Gastrocnemius medialis (tissue), 4 donors: ENCODE measurements at regions of chr14 and their contacts with region 1.

Region 1: DNA sequence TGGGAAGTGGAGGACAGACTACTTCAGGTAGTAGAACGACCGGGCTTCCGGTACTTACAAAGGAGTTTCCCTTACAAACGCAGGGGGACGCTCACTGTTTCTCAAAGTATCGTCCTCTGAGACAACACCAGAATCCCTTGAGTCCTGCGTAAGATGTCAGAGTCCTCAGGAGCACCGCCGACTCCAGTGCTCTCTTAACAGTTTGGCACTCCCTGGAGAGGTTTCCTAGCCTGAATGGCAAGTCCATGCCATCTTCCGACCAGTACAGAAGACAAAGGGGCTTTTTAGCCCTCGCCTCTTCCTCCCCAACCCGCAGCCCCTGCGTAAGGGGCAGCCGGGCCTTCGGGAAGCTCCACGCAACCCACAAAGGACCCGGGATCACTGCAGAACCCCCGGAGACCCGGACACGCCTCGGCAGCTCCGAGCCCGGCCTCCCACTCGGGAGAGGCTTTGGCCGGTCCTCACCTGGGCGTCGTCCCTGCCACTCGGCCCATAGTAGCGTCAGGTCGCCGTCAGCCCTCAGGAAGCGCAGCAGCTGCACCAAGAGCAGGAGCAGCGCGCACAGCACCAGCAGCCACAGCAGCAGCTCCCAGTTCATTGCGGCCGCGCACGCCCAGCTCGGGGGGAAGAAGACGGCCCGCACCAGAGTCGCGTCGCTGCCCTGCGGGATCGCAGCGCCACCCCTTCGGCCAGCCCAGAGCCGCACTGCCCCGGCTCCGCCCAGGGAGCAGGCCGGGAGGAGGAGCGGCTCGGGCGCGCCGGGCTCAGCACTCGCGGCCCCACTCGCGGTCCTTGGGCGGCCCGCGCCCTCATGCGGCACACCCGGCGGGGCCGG is at the start of gene DHRS7:
- DNase-seq: peak; percentile 72 to 83
- ATAC-seq: peak; percentile 42
- H3K4me3 ChIP-seq: peak within 1 kb of the TSS; percentile 81 to 95 (median 92)
- H3K27ac ChIP-seq: peak within 1 kb of the TSS; percentile 97 to 100 (median 99)
- H3K4me1 ChIP-seq: peaks cover 33 to 52% of the 10 kb centered on the region in 2 donors
- H3K27me3 ChIP-seq: no peaks in the 10 kb centered on the region
- CTCF ChIP-seq: peak in 4 of 5 experiments; percentile 32 to 68 (median 40)
- POLR2A ChIP-seq: peak; percentile 71 to 88
- total RNA-seq, gene DHRS7: 937 to 2,179 (median 1,242) TPM

Region 2: DNA sequence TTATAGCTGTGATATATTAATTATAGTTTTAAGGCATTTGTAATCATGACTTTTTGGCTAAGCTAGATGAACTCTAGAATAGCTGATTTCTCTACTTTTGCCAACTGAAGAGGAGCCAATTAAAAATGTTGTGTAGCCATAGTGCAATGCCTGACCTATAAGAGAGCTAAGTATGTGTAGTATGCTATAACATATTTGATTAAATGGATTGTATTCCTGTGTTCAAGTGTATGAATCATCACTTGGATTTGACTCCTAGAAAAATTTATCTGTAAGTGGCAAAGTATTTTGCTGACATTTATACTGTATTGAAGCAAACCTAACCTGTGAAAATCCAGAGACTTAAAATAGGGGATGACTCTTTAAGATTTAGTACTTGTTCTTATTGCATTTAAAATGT is 39.0 kb before region 1 on chr14:
- in situ Hi-C with region 1: no loop called
- intact Hi-C with region 1: no loop called
- DNase-seq: no peak
- ATAC-seq: no peak
- H3K4me3 ChIP-seq: no peak overlapping the region
- H3K27ac ChIP-seq: no peak overlapping the region
- H3K4me1 ChIP-seq: no peaks in the 10 kb centered on the region
- H3K27me3 ChIP-seq: no peaks in the 10 kb centered on the region
- CTCF ChIP-seq: no peak
- POLR2A ChIP-seq: no peak

Region 3: DNA sequence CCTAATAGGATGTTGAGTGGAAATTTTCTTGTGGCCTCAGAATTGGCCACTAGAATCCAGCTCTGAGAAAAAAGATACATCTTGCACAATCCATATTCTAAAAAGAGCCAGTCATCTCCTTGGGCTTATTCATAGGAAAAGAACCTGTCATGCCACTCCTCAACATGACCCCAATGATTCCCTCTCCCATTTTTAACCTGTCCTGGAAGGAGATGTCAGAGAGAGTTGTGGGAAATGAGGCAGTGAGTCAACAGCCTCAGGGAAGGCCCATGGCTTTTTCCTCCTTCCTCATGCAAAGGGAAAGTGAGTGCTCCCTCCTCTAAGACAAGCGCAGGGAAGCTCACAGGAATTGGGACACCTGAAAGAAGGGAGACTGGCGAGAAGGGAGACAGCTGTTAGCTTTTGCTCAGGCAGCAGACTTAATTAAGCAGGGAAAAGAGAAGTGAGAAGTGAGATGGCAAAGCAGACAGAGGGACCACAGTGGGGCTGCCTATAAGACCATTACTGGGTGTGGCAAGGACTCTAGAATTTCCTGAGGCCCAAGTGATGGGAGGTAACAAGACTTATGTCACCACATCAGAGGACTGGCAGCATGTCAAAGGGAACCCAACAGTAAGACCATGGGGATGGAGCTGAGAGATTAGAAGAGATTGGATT is 10.4 kb after region 1 on chr14:
- in situ Hi-C with region 1: no loop called
- intact Hi-C with region 1: loop called (anchors 1 kb)
- DNase-seq: peak; percentile 62 to 73
- ATAC-seq: peak; percentile 83 to 90
- H3K4me3 ChIP-seq: peak overlapping the region in 1 of 4 donors; percentile 18
- H3K27ac ChIP-seq: peak overlapping the region; percentile 90 to 99 (median 94)
- H3K4me1 ChIP-seq: peaks cover 35 to 54% of the 10 kb centered on the region in 2 donors
- H3K27me3 ChIP-seq: no peaks in the 10 kb centered on the region
- CTCF ChIP-seq: no peak
- POLR2A ChIP-seq: peak; percentile 71 to 83

Region 4: GRCh38 chr14:60248697-60249318 is 83.9 kb after region 1 on chr14 and contains the start of gene PPM1A:
- in situ Hi-C with region 1: no loop called
- intact Hi-C with region 1: loop called (anchors 2 kb)
- DNase-seq: peak; percentile 90 to 96
- ATAC-seq: peak; percentile 77 to 80
- H3K4me3 ChIP-seq: peak within 1 kb of the TSS; percentile 77 to 90 (median 88)
- H3K27ac ChIP-seq: peak within 1 kb of the TSS; percentile 97 to 100 (median 100)
- H3K4me1 ChIP-seq: peaks cover 35 to 38% of the 10 kb centered on the region in 2 donors
- H3K27me3 ChIP-seq: no peaks in the 10 kb centered on the region
- CTCF ChIP-seq: peak in 1 of 5 experiments; percentile 21
- POLR2A ChIP-seq: peak; percentile 83 to 95
- total RNA-seq, gene PPM1A: 81.2 to 107 (median 86.1) TPM

Region 5: DNA sequence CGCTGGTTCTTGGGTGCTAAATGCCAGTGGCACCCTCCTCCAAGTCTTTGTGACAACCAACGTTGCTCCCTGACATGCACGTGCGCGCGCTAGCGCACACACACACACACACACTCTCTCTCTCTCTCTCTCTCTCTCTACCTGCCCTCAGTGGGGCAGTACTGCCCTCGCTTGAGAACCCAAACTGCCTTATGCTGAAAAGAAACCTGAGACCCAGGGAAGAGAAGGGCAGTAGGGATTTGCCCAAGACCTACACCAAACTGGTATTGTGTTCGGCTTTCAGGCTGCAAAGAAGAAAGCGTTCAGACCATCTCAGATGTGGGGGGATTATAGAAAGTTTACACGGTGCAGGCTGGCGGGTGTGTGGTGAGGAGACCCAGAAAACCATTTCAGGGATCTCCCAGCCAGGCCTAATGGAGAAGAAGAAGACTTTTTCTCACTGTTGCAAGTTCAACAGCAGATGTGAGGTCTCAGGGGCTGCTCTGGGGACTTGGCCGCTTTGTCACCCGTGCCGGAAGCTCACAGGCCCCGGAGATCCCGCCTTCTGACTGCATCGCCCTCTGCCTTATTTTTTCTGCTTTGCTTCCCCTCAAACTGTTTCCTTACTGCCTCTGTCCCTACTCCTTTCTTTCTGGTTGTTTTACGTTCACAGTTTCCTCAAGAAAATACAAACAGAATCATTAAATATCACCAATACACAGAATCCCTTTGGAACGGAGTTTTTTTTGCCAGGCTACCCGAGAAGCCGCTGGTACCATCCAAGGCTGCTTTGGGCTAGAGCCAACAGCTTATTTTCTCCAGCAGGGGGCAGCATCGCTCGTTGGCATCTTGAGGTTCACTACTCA is 166.5 kb after region 1 on chr14:
- in situ Hi-C with region 1: no loop called
- intact Hi-C with region 1: no loop called
- DNase-seq: peak in 1 of 2 donors; percentile 29
- ATAC-seq: peak in 1 of 2 donors; percentile 32
- H3K4me3 ChIP-seq: peak overlapping the region; percentile 26 to 57 (median 44)
- H3K27ac ChIP-seq: peak overlapping the region in 1 of 4 donors; percentile 27
- H3K4me1 ChIP-seq: peaks cover 8 to 10% of the 10 kb centered on the region in 2 donors
- H3K27me3 ChIP-seq: no peaks in the 10 kb centered on the region
- CTCF ChIP-seq: peak; percentile 22 to 67 (median 51)
- POLR2A ChIP-seq: no peak